ENCODE measurements at regions of chr3 and their contacts with region 1.

Region 1: DNA sequence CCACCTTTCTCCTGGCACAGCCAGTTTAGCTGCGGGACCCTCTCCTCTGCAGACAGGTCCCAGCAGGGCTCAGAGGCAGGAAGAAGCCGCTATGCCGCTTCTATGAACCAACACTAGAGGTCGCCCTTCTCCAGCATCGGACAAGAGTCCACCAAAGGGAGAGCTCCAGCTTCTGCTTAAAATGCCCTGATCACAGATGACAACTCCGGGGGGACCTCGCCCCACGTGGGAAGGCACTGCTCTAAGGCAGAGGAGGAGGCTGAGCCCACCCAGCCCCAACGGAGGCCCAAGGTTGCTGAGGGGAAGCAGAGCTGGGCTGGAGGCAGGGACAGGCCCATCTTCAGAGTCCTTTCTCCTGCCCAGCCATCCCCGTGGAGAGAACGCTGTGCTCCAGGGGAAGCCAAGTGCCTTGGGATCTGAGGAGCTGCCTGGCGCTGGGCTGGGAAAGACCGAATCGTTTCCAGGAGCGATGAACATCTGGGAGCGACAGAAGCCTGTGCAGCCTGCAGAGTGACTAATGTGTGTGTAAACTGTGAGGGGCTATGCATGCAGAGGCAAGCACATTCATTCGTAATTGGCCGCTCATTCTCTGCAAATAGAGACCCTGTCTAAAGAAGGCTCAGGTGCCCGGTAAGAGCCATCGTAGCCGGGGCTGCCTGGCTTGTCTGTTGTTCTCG is 43.5 kb upstream of the BDH1 start:
- DNase-seq: peak; percentile 44
- H3K4me3 ChIP-seq: peak overlapping the region; percentile 53
- H3K27ac ChIP-seq: peak overlapping the region; percentile 39
- H3K27me3 ChIP-seq: no peaks in the 10 kb centered on the region
- CTCF ChIP-seq: peak; percentile 90

Region 2: GRCh38 chr3:197580253-197580691 is 19.0 kb before region 1 on chr3:
- CTCF ChIA-PET with region 1: interaction called, 29 read pairs
- POLR2A ChIA-PET with region 1: no interaction called
- DNase-seq: no peak
- H3K4me3 ChIP-seq: no peak overlapping the region
- H3K27ac ChIP-seq: no peak overlapping the region
- H3K27me3 ChIP-seq: peaks cover 16% of the 10 kb centered on the region
- CTCF ChIP-seq: no peak

Region 3: GRCh38 chr3:197613199-197613598 is 14.0 kb after region 1 on chr3:
- CTCF ChIA-PET with region 1: interaction called, 105 read pairs
- POLR2A ChIA-PET with region 1: no interaction called
- DNase-seq: no peak
- H3K4me3 ChIP-seq: no peak overlapping the region
- H3K27ac ChIP-seq: no peak overlapping the region
- H3K27me3 ChIP-seq: no peaks in the 10 kb centered on the region
- CTCF ChIP-seq: no peak

Region 4: GRCh38 chr3:197700095-197700494 is 100.9 kb after region 1 on chr3:
- CTCF ChIA-PET with region 1: no interaction called
- POLR2A ChIA-PET with region 1: no interaction called
- DNase-seq: no peak
- H3K4me3 ChIP-seq: no peak overlapping the region
- H3K27ac ChIP-seq: peak overlapping the region; percentile 57
- H3K27me3 ChIP-seq: no peaks in the 10 kb centered on the region
- CTCF ChIP-seq: no peak